SK-N-SH (cell line): ENCODE measurements at regions of chr11 and their contacts with region 1.

Region 1: GRCh38 chr11:42524534-42525227 is 787.1 kb upstream of the API5 start:
- DNase-seq: peak; percentile 50
- H3K4me3 ChIP-seq: peak overlapping the region in 1 of 2 experiments; percentile 48; a peak in 1 of 4 replicates
- H3K27ac ChIP-seq: no peak overlapping the region
- H3K4me1 ChIP-seq: peaks cover 0 to 3% of the 10 kb centered on the region in 2 experiments; a peak in 1 of 4 replicates
- H3K27me3 ChIP-seq: no peaks in the 10 kb centered on the region
- CTCF ChIP-seq: peak; percentile 44
- EP300 ChIP-seq: no peak
- RAD21 ChIP-seq: peak; percentile 92

Region 2: DNA sequence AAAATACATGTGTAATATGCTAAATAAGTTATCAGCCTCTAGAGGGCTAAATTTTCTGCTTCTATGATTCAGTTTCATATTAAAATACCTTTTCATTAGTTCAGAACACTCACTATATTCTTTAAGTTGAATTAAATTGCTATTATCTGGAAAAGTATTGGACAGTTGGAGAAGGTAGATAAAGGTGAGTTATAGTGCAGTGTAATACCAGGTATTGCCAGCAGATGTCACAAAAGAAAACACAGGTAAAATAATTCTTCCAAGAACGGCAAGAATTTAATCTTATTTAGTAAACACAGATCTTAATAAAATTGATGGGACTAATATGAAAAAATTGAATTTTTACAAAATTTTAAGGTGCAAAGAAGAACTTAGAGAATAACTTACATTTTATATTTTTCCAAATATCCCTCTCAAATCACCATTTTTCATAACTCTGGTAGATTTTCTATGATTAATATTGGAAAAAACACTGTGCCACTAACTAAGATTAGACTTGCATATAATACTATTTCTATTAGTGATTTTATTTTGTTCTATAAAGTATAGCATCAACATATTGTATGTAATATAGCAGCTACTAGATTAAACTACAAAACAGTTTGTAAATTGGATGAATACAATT is 1063.5 kb before region 1 on chr11:
- CTCF ChIA-PET with region 1: interaction called, 26 read pairs
- POLR2A ChIA-PET with region 1: no interaction called
- DNase-seq: no peak
- H3K4me3 ChIP-seq: no peak overlapping the region
- H3K27ac ChIP-seq: no peak overlapping the region
- H3K4me1 ChIP-seq: peaks cover 0 to 3% of the 10 kb centered on the region in 2 experiments; a peak in 1 of 4 replicates
- H3K27me3 ChIP-seq: no peaks in the 10 kb centered on the region
- CTCF ChIP-seq: peak; percentile 72
- EP300 ChIP-seq: no peak
- RAD21 ChIP-seq: peak; percentile 62

Region 3: GRCh38 chr11:41498726-41499125 is 1026.0 kb before region 1 on chr11:
- CTCF ChIA-PET with region 1: interaction called, 16 read pairs
- POLR2A ChIA-PET with region 1: no interaction called
- DNase-seq: peak; percentile 5
- H3K4me3 ChIP-seq: no peak overlapping the region; a peak in 1 of 4 replicates
- H3K27ac ChIP-seq: no peak overlapping the region
- H3K4me1 ChIP-seq: peaks cover 0 to 10% of the 10 kb centered on the region in 2 experiments; a peak in 2 of 4 replicates
- H3K27me3 ChIP-seq: no peaks in the 10 kb centered on the region
- CTCF ChIP-seq: peak; percentile 54
- EP300 ChIP-seq: no peak
- RAD21 ChIP-seq: peak; percentile 70

Region 4: DNA sequence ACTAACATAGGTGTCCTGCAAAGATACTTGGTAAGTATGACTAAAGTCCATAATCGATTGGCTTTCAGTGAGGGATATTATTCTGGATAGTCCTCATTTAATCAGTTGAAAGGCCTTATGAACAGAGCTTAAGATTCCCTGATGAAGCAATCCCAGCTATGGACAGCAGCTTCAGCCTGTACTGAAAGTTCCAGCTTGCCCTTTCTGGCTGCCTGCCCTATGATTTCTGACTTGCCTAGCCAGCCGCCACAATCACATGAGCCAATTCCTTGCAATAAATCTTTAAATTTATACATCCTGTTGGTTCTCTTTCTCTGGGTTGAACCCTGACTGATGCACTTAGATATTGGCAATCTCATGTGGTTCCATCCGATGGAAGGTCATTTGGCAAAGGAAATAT is 28.1 kb after region 1 on chr11:
- CTCF ChIA-PET with region 1: interaction called, 10 read pairs
- POLR2A ChIA-PET with region 1: no interaction called
- DNase-seq: no peak
- H3K4me3 ChIP-seq: no peak overlapping the region
- H3K27ac ChIP-seq: no peak overlapping the region
- H3K4me1 ChIP-seq: no peaks in the 10 kb centered on the region
- H3K27me3 ChIP-seq: no peaks in the 10 kb centered on the region
- CTCF ChIP-seq: no peak
- EP300 ChIP-seq: no peak
- RAD21 ChIP-seq: no peak

Region 5: DNA sequence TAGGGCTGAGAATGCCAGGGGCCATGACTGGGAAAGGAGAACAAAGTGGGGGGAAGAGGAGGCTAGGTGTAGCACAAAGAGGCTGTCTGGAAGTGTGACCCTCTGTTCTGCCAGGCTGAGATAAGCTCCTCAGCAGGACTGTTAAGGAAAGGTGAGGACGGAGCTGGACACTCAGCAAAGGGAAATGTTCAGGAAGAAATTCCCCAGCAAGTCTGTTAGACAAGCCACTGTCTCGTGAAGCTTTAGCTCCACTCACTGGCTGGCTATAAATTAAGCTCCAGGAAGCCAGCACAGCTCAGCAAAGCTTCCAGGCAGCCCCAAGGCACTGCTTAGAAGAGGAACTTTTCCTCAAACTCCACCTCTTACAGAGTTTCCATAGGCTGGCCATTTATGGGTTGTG is 605.9 kb after region 1 on chr11:
- CTCF ChIA-PET with region 1: interaction called, 17 read pairs
- POLR2A ChIA-PET with region 1: interaction called, 3 read pairs
- DNase-seq: peak; percentile 34
- H3K4me3 ChIP-seq: no peak overlapping the region
- H3K27ac ChIP-seq: no peak overlapping the region
- H3K4me1 ChIP-seq: peaks cover 0 to 4% of the 10 kb centered on the region in 2 experiments; a peak in 1 of 4 replicates
- H3K27me3 ChIP-seq: no peaks in the 10 kb centered on the region
- CTCF ChIP-seq: no peak
- EP300 ChIP-seq: no peak
- RAD21 ChIP-seq: peak; percentile 80